HCT116 (cell line): ENCODE measurements at regions of chr9 and their contacts with region 1.

Region 1: GRCh38 chr9:38362852-38363593 is 29.5 kb upstream of the ALDH1B1 start:
- DNase-seq: peak; percentile 63
- ATAC-seq: peak; percentile 82
- H3K4me3 ChIP-seq: no peak overlapping the region
- H3K27ac ChIP-seq: no peak overlapping the region
- H3K4me1 ChIP-seq: peaks cover 0 to 5% of the 10 kb centered on the region in 2 experiments; a peak in 2 of 4 replicates
- H3K27me3 ChIP-seq: no peaks in the 10 kb centered on the region
- CTCF ChIP-seq: peak; percentile 59 to 89 (median 73)
- POLR2A ChIP-seq: no peak
- RAD21 ChIP-seq: peak; percentile 97

Region 2: DNA sequence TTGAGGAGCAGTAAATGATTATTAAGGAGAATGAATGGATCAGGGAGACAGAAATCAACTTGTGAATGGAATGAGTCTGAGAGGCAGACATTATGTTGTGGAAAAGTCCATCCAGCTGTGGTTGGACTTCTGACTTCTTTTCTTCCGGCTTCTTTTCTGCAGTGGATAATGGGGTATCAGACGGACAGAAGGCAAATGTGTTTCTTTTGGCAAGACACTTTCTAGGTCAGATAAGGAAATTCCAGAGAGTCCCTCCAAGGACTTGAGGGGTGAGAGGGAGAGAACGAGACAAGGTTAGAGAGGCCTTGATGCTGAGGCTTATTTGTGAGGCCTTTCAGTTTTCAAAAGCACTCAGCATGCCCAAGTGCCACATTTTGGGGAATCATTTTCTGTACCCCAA is 957.7 kb before region 1 on chr9:
- CTCF ChIA-PET with region 1: no interaction called
- POLR2A ChIA-PET with region 1: no interaction called
- RAD21 ChIA-PET with region 1: no interaction called
- intact Hi-C with region 1: no loop called
- DNase-seq: no peak
- ATAC-seq: no peak
- H3K4me3 ChIP-seq: no peak overlapping the region
- H3K27ac ChIP-seq: no peak overlapping the region
- H3K4me1 ChIP-seq: peaks cover 7 to 25% of the 10 kb centered on the region in 2 experiments
- H3K27me3 ChIP-seq: no peaks in the 10 kb centered on the region
- CTCF ChIP-seq: no peak
- POLR2A ChIP-seq: no peak
- RAD21 ChIP-seq: no peak

Region 3: GRCh38 chr9:37582548-37583157 is 780.4 kb before region 1 on chr9:
- CTCF ChIA-PET with region 1: no interaction called
- POLR2A ChIA-PET with region 1: no interaction called
- RAD21 ChIA-PET with region 1: no interaction called
- intact Hi-C with region 1: loop called (anchors 2 kb)
- DNase-seq: peak; percentile 42
- ATAC-seq: peak; percentile 71
- H3K4me3 ChIP-seq: no peak overlapping the region
- H3K27ac ChIP-seq: no peak overlapping the region
- H3K4me1 ChIP-seq: no peaks in the 10 kb centered on the region
- H3K27me3 ChIP-seq: no peaks in the 10 kb centered on the region
- CTCF ChIP-seq: peak; percentile 34 to 73 (median 57); a peak in 5 of 6 replicates
- POLR2A ChIP-seq: no peak
- RAD21 ChIP-seq: peak; percentile 65

Region 4: GRCh38 chr9:37746848-37747753 is 615.9 kb before region 1 on chr9:
- CTCF ChIA-PET with region 1: no interaction called
- POLR2A ChIA-PET with region 1: no interaction called
- RAD21 ChIA-PET with region 1: no interaction called
- intact Hi-C with region 1: loop called (anchors 2 kb)
- DNase-seq: peak; percentile 59
- ATAC-seq: peak; percentile 96
- H3K4me3 ChIP-seq: no peak overlapping the region
- H3K27ac ChIP-seq: no peak overlapping the region
- H3K4me1 ChIP-seq: no peaks in the 10 kb centered on the region
- H3K27me3 ChIP-seq: no peaks in the 10 kb centered on the region
- CTCF ChIP-seq: peak; percentile 92 to 96 (median 94)
- POLR2A ChIP-seq: no peak
- RAD21 ChIP-seq: peak; percentile 88

Region 5: DNA sequence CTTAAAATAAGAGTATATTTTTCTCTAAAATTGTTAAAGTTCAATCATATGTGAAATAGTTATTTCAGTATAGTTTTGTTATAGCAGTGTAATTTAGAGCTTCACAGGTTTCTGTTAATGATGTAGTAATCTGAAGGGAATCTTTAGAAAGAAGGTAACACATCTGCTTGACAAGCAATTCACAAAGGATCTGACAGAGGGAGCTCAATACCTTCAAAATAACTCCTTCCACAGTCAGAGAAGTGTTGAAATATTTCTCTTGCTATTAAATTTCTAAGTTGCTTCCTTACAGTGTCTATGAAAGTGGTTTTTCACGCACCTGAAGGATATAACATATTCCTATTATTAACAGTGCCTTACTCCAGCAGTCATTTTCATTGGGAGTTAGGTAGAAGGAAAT is 504.0 kb before region 1 on chr9:
- CTCF ChIA-PET with region 1: no interaction called
- POLR2A ChIA-PET with region 1: no interaction called
- RAD21 ChIA-PET with region 1: no interaction called
- intact Hi-C with region 1: loop called (anchors 5 kb)
- DNase-seq: no peak
- ATAC-seq: no peak
- H3K4me3 ChIP-seq: no peak overlapping the region
- H3K27ac ChIP-seq: no peak overlapping the region
- H3K4me1 ChIP-seq: no peaks in the 10 kb centered on the region
- H3K27me3 ChIP-seq: no peaks in the 10 kb centered on the region
- CTCF ChIP-seq: peak; percentile 11 to 33 (median 14); a peak in 3 of 6 replicates
- POLR2A ChIP-seq: no peak
- RAD21 ChIP-seq: peak; percentile 40

Region 6: DNA sequence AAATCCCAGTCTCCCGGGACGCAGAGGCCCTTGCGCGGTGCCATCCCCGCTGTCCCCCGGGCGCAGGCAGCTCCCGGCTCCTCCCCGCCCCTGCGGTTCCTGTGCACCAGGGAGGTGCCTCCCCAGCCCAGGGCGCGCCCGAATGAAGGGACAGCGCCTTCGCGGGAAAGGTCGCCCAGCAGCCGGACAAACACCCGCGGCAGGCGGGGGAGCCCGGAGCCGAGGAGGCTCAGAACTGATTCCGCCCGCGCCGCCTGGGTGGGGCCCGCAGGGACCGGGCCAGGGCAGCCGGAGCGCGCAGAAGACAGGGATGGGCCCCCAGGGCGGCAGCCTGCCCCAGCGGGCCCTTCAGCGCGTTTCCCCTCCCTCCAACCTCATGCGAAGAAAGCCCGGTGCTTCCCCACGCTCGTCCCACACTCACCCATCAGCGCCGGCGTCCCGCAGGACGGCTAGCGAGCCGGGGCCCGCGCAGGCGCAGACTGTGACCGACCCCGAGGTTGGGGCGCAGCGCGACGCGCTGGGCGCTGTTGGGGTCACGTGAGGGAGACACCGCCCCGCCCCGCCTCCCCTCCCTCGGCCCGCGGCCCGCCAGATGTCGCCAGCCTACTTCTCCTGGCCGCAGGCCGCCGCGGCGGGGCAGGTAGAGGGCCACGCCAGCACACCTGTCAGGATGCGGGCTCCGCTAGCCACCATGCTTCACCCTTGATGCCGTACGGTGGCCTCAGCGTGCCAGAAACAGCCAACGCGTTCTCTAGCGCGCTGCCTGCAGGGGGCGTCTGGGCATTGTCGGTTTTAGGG is 459.2 kb before region 1 on chr9 and contains the start of gene SLC25A51:
- CTCF ChIA-PET with region 1: no interaction called
- POLR2A ChIA-PET with region 1: no interaction called
- RAD21 ChIA-PET with region 1: no interaction called
- intact Hi-C with region 1: loop called (anchors 2 kb)
- DNase-seq: peak; percentile 87
- ATAC-seq: peak; percentile 91
- H3K4me3 ChIP-seq: peak within 1 kb of the TSS; percentile 83 to 87
- H3K27ac ChIP-seq: peak within 1 kb of the TSS; percentile 88
- H3K4me1 ChIP-seq: peaks cover 9 to 18% of the 10 kb centered on the region in 2 experiments; a peak in 2 of 4 replicates
- H3K27me3 ChIP-seq: no peaks in the 10 kb centered on the region
- CTCF ChIP-seq: peak; percentile 85 to 92 (median 88)
- POLR2A ChIP-seq: peak; percentile 85
- RAD21 ChIP-seq: peak; percentile 85
- total RNA-seq, gene SLC25A51: 27.3 TPM

Region 7: GRCh38 chr9:38088006-38088925 is 274.8 kb before region 1 on chr9:
- CTCF ChIA-PET with region 1: no interaction called
- POLR2A ChIA-PET with region 1: no interaction called
- RAD21 ChIA-PET with region 1: no interaction called
- intact Hi-C with region 1: loop called (anchors 1 kb)
- DNase-seq: peak; percentile 24
- ATAC-seq: peak; percentile 93
- H3K4me3 ChIP-seq: no peak overlapping the region
- H3K27ac ChIP-seq: no peak overlapping the region
- H3K4me1 ChIP-seq: peaks cover 0 to 2% of the 10 kb centered on the region in 2 experiments; a peak in 1 of 4 replicates
- H3K27me3 ChIP-seq: no peaks in the 10 kb centered on the region
- CTCF ChIP-seq: peak; percentile 78 to 99 (median 97)
- POLR2A ChIP-seq: no peak
- RAD21 ChIP-seq: peak; percentile 79

Region 8: GRCh38 chr9:38160613-38161215 is 202.3 kb before region 1 on chr9:
- CTCF ChIA-PET with region 1: no interaction called
- POLR2A ChIA-PET with region 1: no interaction called
- RAD21 ChIA-PET with region 1: no interaction called
- intact Hi-C with region 1: loop called (anchors 5 kb)
- DNase-seq: peak; percentile 69
- ATAC-seq: peak; percentile 97
- H3K4me3 ChIP-seq: no peak overlapping the region
- H3K27ac ChIP-seq: no peak overlapping the region
- H3K4me1 ChIP-seq: 0 out of 4 replicates have a peak, but pooled peaks cover 0 to 2% of the 10 kb centered on the region in 2 experiments
- H3K27me3 ChIP-seq: no peaks in the 10 kb centered on the region
- CTCF ChIP-seq: peak; percentile 71 to 96 (median 92)
- POLR2A ChIP-seq: no peak
- RAD21 ChIP-seq: peak; percentile 70